K562 (cell line): ENCODE measurements at regions of chr12 and their contacts with region 1.

Region 1: DNA sequence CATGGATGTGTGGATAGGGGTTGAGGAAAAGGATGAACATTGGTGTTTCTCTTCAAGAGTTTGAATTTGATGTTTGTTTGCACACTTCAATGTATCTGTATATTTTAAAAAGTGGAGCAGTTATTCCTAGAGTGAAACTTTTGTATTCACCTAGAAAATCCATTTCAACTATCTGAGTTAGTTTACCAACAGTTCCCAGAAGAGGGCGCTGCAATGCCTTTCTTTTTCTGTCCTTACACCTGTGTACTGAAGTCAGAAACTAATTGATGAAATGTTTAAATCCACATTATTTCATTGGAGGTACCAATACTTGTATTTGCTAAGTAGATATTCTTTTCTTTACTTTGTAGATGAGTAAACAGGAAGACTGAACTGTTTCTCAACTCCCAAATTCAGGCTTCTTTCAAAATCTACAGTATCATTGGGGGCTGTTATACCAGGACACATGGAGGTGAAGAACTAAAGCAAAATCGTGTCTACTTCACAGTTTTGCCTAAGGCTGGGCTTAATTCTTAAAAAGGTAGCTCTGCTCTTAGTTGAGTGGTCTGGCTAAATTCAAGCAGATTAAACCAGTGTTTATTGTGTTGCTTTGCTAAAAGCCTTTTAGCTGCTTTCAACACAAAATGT is 26.6 kb upstream of the KLRB1 start:
- DNase-seq: peak; percentile 21 to 69 (median 30)
- ATAC-seq: peak; percentile 70
- H3K4me3 ChIP-seq: no peak overlapping the region
- H3K27ac ChIP-seq: no peak overlapping the region
- H3K4me1 ChIP-seq: no peaks in the 10 kb centered on the region; a peak in 1 of 5 replicates
- H3K27me3 ChIP-seq: no peaks in the 10 kb centered on the region
- CTCF ChIP-seq: peak; percentile 52 to 66 (median 54); a peak in 5 of 6 replicates
- EP300 ChIP-seq: no peak
- POLR2A ChIP-seq: no peak
- RAD21 ChIP-seq: peak; percentile 27 to 82; a peak in 3 of 4 replicates

Region 2: DNA sequence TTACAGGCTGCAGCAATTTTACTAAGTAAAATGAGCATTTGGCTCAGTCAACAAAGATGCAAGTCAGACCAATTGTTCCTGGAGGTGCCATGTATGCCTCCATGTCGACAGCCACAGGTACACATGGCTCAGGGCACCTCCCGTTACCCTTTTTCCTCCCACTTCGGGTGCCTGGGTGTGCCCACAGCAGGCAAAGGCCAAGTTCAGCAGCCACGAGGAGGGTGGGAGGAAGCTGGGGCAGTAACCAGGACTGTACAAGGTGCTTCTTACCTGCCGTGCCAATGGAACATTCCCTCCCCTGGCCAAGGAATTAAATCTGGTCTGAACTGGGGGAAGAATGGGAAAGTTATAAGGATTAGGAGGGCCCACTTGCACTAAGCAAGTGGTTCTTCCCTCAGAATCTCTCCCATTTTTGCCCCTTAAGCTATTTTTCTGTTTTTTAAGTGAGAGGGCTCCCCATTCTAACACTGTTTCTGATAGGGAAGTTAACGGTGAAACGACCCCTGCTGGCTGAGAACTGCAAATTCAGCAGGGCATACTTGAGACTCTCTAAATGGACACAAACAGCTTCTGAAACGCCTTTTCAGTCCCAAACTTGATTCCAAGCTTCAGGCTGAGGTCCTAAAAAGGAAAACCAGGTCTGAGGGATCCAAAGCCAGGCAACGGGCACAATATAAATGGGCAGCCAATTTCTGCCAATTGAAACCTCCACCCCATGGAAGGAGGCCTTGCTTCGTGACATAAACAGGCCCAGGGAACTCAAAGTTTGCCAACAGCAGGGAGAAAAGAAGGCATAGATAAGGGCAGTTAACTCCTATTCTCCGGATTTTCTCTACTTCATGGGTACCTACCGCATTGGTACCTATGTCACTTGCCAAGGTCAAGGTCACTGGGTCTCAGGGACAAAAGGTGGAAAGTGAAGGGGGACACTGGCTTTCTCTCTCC is 73.8 kb after region 1 on chr12:
- CTCF ChIA-PET with region 1: interaction called, 4 read pairs
- POLR2A ChIA-PET with region 1: interaction called, 3 read pairs
- in situ Hi-C with region 1: no loop called
- intact Hi-C with region 1: loop called (anchors 1 kb)
- DNase-seq: peak; percentile 34 to 67 (median 42)
- ATAC-seq: peak; percentile 88
- H3K4me3 ChIP-seq: no peak overlapping the region
- H3K27ac ChIP-seq: no peak overlapping the region
- H3K4me1 ChIP-seq: no peaks in the 10 kb centered on the region; a peak in 1 of 5 replicates
- H3K27me3 ChIP-seq: no peaks in the 10 kb centered on the region
- CTCF ChIP-seq: peak; percentile 56 to 70 (median 69)
- EP300 ChIP-seq: no peak
- POLR2A ChIP-seq: no peak
- RAD21 ChIP-seq: peak; percentile 51 to 75

Region 3: GRCh38 chr12:9797722-9798619 is 163.7 kb after region 1 on chr12:
- CTCF ChIA-PET with region 1: interaction called, 4 read pairs
- POLR2A ChIA-PET with region 1: no interaction called
- in situ Hi-C with region 1: no loop called
- intact Hi-C with region 1: loop called (anchors 5 kb)
- DNase-seq: peak; percentile 18 to 88 (median 46)
- ATAC-seq: peak; percentile 99
- H3K4me3 ChIP-seq: no peak overlapping the region
- H3K27ac ChIP-seq: no peak overlapping the region
- H3K4me1 ChIP-seq: peaks cover 0 to 11% of the 10 kb centered on the region in 2 experiments; a peak in 2 of 5 replicates
- H3K27me3 ChIP-seq: no peaks in the 10 kb centered on the region
- CTCF ChIP-seq: peak; percentile 79 to 86 (median 85)
- EP300 ChIP-seq: no peak
- POLR2A ChIP-seq: no peak
- RAD21 ChIP-seq: peak; percentile 93 to 98

Region 4: GRCh38 chr12:9925708-9926393 is 291.6 kb after region 1 on chr12:
- CTCF ChIA-PET with region 1: no interaction called
- POLR2A ChIA-PET with region 1: no interaction called
- in situ Hi-C with region 1: no loop called
- intact Hi-C with region 1: no loop called
- DNase-seq: peak in 2 of 4 experiments; percentile 7 to 23
- ATAC-seq: 0 out of 3 replicates have a peak, but pooled peaks have one; percentile 45
- H3K4me3 ChIP-seq: no peak overlapping the region
- H3K27ac ChIP-seq: no peak overlapping the region
- H3K4me1 ChIP-seq: no peaks in the 10 kb centered on the region
- H3K27me3 ChIP-seq: no peaks in the 10 kb centered on the region
- CTCF ChIP-seq: peak; percentile 33 to 42 (median 33); a peak in 4 of 6 replicates
- EP300 ChIP-seq: no peak
- POLR2A ChIP-seq: no peak
- RAD21 ChIP-seq: peak; percentile 33 to 52